ENCODE measurements at regions of chr7 and their contacts with region 1.

Region 1: DNA sequence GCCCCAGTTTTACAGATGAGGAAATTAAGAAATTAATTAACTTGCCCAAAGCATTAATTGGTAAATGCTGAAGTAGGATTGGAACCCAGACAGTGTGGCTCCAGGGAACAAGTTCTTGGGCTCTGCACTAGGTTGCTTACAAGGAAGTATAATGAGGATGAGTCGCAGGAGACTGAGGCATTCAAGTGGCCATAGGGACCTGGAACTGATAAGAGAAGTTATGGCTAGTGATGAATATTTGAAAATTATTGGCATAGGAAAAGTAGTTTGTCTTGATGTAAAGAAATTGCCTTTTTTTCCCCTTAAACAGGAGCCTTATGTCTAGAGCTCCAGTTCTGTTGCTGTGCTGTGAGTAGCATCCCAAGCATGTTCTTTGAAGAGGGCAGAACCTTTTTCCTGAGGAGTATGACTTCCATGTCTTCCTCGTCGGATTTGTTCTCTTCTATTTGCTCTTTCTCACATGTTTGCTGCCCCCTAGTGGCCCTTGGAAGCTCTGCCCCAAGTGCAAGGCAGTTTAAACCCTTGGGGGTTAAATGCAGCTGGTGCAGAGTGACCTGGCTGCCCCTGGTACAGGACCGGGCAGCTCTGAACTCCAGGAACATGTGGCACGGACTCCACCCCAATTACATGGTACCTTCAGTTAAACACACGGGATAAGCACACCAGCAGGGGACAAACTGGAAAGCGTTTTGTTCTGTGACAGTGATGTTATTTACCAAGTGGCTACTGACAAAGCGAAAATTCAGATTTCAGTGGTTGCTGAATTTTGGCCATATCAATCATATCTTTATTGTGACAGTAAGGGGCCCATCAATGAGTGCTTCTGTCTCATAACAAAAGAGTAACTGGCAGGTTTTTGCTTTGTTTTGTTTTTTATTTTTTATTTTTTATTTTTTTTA is 148.8 kb downstream of the HECW1 start:
- DNase-seq: peak; percentile 65
- H3K4me3 ChIP-seq: no peak overlapping the region
- H3K27ac ChIP-seq: no peak overlapping the region
- H3K4me1 ChIP-seq: peaks cover 3% of the 10 kb centered on the region
- H3K27me3 ChIP-seq: no peaks in the 10 kb centered on the region
- CTCF ChIP-seq: peak; percentile 94 to 95

Region 2: GRCh38 chr7:42931834-42932651 is 329.2 kb before region 1 on chr7 and contains the starts of genes MRPL32 and PSMA2:
- CTCF ChIA-PET with region 1: interaction called, 5 read pairs
- dilution Hi-C with region 1: no loop called
- in situ Hi-C with region 1: loop called in 1 of 2 experiments (anchors 10 kb)
- intact Hi-C with region 1: no loop called
- DNase-seq: peak; percentile 97
- H3K4me3 ChIP-seq: peak within 1 kb of the TSS; percentile 78 to 92 (median 88)
- H3K27ac ChIP-seq: peak within 1 kb of the TSS; percentile 91
- H3K4me1 ChIP-seq: peaks cover 29% of the 10 kb centered on the region
- H3K27me3 ChIP-seq: no peaks in the 10 kb centered on the region
- CTCF ChIP-seq: no peak
- total RNA-seq, gene MRPL32: 29.2 to 77.0 TPM
- total RNA-seq, gene PSMA2: 54.0 to 97.0 TPM

Region 3: DNA sequence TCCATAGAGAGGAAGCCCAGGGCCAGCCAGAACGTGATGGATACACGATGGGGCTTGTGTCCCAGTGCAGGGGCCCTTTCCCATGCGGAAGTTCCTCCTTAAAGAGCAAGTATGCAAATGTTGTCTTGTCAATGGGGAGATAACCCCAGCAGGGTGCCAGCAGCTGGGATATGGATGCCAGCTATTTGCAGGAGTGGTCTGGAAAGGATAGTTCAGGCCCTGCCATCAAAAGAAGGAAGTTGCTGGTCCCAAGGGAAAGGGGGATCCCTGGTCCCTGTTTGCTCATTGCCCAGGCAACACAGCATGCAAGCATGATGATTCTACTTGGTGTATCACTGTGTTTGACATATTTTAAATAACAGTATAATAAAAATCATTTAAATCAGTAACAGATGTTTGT is 221.9 kb before region 1 on chr7:
- CTCF ChIA-PET with region 1: no interaction called
- dilution Hi-C with region 1: no loop called
- in situ Hi-C with region 1: no loop called
- intact Hi-C with region 1: no loop called
- DNase-seq: no peak
- H3K4me3 ChIP-seq: no peak overlapping the region
- H3K27ac ChIP-seq: no peak overlapping the region
- H3K4me1 ChIP-seq: no peaks in the 10 kb centered on the region
- H3K27me3 ChIP-seq: no peaks in the 10 kb centered on the region
- CTCF ChIP-seq: no peak

Region 4: GRCh38 chr7:43071604-43072003 is 189.6 kb before region 1 on chr7:
- CTCF ChIA-PET with region 1: no interaction called
- dilution Hi-C with region 1: no loop called
- in situ Hi-C with region 1: no loop called
- intact Hi-C with region 1: loop called (anchors 1 kb)
- DNase-seq: no peak
- H3K4me3 ChIP-seq: no peak overlapping the region
- H3K27ac ChIP-seq: no peak overlapping the region
- H3K4me1 ChIP-seq: no peaks in the 10 kb centered on the region
- H3K27me3 ChIP-seq: no peaks in the 10 kb centered on the region
- CTCF ChIP-seq: peak; percentile 27 to 35

Region 5: DNA sequence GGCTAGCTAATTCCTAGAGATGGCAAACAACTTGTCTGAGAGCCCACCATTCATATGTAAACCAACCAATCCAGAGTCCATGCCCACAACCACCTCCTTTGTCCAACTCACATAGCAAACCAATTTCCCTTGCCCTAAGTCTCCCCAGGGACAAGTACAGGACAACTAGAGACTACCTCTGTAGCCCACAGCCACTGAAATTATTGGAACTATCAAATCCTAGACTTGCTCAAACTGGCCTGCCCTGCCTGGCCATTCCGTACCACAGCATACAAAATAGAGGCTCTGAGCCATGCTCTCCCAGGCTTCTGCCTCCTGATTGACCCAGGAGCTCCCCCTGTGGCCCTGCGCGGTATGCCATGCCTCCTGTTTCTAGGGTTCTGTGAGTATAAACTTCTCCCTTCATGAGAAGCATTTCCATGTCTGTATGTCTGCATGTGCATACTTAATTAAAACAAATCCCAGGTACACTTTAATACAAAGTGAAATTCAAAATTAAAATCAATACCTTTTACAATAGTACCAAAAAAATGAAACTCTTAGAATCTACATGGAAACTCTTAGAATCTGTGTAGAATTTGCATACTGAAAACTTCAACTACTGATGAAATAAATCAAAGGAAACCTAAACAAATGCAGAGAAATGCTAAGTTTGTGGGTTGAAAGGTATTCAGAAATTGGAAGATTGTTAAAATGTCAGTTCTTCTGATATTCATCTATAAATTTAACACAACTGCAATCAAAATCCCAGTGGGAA is 152.8 kb before region 1 on chr7:
- CTCF ChIA-PET with region 1: no interaction called
- dilution Hi-C with region 1: no loop called
- in situ Hi-C with region 1: no loop called
- intact Hi-C with region 1: loop called (anchors 2 kb)
- DNase-seq: peak; percentile 50
- H3K4me3 ChIP-seq: no peak overlapping the region
- H3K27ac ChIP-seq: no peak overlapping the region
- H3K4me1 ChIP-seq: peaks cover 9% of the 10 kb centered on the region
- H3K27me3 ChIP-seq: peaks cover 29% of the 10 kb centered on the region
- CTCF ChIP-seq: peak; percentile 98 to 99

Region 6: DNA sequence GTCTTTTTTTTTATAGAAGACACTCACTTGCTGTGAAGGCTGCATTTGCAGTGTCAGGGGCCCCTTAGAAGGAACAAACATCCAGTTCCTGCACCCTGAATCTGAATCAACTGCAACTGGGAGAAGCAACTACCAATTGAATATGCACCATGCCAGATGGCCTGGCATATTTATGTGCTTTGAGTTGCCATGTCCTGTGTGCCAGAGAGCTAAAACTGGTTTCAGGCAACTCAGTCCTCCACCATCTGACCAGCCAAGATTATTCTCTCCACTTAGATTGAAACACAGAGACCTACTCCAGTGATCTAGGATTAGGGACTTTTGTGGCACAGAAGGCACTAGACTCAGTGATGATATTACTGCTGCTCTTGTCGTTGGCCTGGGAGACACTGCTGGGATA is 76.6 kb after region 1 on chr7:
- CTCF ChIA-PET with region 1: no interaction called
- dilution Hi-C with region 1: no loop called
- in situ Hi-C with region 1: no loop called
- intact Hi-C with region 1: no loop called
- DNase-seq: no peak
- H3K4me3 ChIP-seq: no peak overlapping the region
- H3K27ac ChIP-seq: no peak overlapping the region
- H3K4me1 ChIP-seq: peaks cover 5% of the 10 kb centered on the region
- H3K27me3 ChIP-seq: no peaks in the 10 kb centered on the region
- CTCF ChIP-seq: no peak

Measured in mammary epithelial cell (primary cell).